ENCODE measurements at regions of chr2 and their contacts with region 1.

Region 1: GRCh38 chr2:182763311-182763912 is 47.4 kb downstream of the DNAJC10 start:
- DNase-seq: no peak
- ATAC-seq: no peak
- H3K4me3 ChIP-seq: no peak overlapping the region
- H3K27ac ChIP-seq: no peak overlapping the region
- H3K4me1 ChIP-seq: no peaks in the 10 kb centered on the region
- H3K27me3 ChIP-seq: no peaks in the 10 kb centered on the region

Region 2: GRCh38 chr2:182980115-182980514 is 216.7 kb after region 1 on chr2:
- intact Hi-C with region 1: loop called (anchors 5 kb)
- DNase-seq: no peak
- ATAC-seq: no peak
- H3K4me3 ChIP-seq: no peak overlapping the region
- H3K27ac ChIP-seq: no peak overlapping the region
- H3K4me1 ChIP-seq: no peaks in the 10 kb centered on the region
- H3K27me3 ChIP-seq: no peaks in the 10 kb centered on the region

Measured in aorta (tissue), 5 donors.